Mammary epithelial cell (primary cell): ENCODE measurements at regions of chrX and their contacts with region 1.

Region 1: DNA sequence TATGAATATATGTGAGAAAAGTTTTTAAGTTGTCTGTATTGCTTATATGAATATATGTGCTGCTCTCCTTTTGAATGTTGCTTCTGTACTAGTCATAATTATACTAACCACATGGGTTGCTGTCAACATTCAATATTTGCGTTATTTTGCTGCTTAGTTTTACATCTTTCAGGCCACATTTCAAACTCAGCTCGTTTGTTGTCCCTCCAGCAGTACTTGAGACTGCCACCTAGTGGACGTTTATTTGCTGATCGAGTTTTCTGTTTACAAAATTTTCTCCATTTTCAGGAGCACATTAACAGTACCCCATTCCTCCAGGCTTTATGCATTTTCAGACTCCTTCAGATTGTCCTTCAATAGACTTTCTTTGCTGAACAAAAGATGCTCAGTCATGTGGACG is 75.8 kb downstream of the NUDT11 start:
- DNase-seq: peak; percentile 8
- H3K4me3 ChIP-seq: no peak overlapping the region
- H3K27ac ChIP-seq: no peak overlapping the region
- H3K4me1 ChIP-seq: no peaks in the 10 kb centered on the region
- H3K27me3 ChIP-seq: peaks cover 8% of the 10 kb centered on the region
- CTCF ChIP-seq: peak; percentile 68 to 70

Region 2: GRCh38 chrX:51144852-51145442 is 275.7 kb before region 1 on chrX:
- CTCF ChIA-PET with region 1: no interaction called
- dilution Hi-C with region 1: no loop called
- in situ Hi-C with region 1: loop called in 1 of 2 experiments (anchors 25 kb)
- intact Hi-C with region 1: loop called (anchors 1 kb)
- DNase-seq: peak; percentile 16
- H3K4me3 ChIP-seq: no peak overlapping the region
- H3K27ac ChIP-seq: no peak overlapping the region
- H3K4me1 ChIP-seq: no peaks in the 10 kb centered on the region
- H3K27me3 ChIP-seq: no peaks in the 10 kb centered on the region
- CTCF ChIP-seq: peak; percentile 72 to 74

Region 3: GRCh38 chrX:51336584-51336983 is 84.0 kb before region 1 on chrX:
- CTCF ChIA-PET with region 1: interaction called, 10 read pairs
- dilution Hi-C with region 1: no loop called
- in situ Hi-C with region 1: no loop called
- intact Hi-C with region 1: loop called (anchors 1 kb)
- DNase-seq: peak; percentile 25
- H3K4me3 ChIP-seq: no peak overlapping the region
- H3K27ac ChIP-seq: no peak overlapping the region
- H3K4me1 ChIP-seq: no peaks in the 10 kb centered on the region
- H3K27me3 ChIP-seq: peaks cover 2% of the 10 kb centered on the region
- CTCF ChIP-seq: peak; percentile 53 to 66

Region 4: DNA sequence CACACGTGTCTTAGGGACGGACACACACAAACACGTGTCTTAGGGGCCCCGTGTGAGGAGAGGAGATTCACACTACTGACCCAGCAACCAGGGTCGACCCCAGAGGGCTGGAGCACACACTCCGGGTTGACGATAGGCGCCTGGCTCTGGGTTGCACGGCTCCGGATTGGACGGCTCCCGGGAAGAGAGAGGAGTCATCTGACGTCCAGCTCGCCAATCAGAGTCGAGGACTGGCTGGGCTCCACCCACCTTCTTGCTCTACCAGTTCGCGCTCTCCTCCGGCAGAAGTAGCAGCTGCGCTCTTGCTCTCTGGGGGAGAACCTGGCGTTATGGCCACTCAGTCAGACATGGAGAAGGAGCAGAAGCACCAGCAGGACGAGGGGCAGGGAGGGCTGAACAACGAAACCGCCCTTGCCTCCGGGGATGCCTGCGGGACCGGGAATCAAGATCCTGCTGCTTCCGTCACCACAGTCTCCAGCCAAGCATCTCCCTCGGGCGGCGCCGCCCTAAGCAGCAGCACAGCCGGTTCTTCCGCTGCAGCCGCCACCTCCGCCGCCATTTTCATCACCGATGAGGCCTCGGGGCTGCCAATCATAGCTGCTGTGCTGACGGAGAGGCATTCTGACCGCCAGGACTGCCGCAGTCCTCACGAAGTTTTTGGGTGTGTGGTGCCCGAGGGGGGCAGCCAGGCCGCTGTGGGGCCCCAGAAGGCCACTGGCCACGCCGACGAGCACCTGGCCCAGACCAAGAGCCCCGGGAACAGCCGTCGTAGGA is 13.7 kb before region 1 on chrX:
- CTCF ChIA-PET with region 1: interaction called, 12 read pairs
- dilution Hi-C with region 1: no loop called
- in situ Hi-C with region 1: no loop called
- intact Hi-C with region 1: no loop called
- DNase-seq: no peak
- H3K4me3 ChIP-seq: no peak overlapping the region
- H3K27ac ChIP-seq: no peak overlapping the region
- H3K4me1 ChIP-seq: no peaks in the 10 kb centered on the region
- H3K27me3 ChIP-seq: peaks cover 4% of the 10 kb centered on the region
- CTCF ChIP-seq: no peak